CD8-positive, alpha-beta T cell (primary cell): ENCODE measurements at regions of chr9 and their contacts with region 1.

Region 1: DNA sequence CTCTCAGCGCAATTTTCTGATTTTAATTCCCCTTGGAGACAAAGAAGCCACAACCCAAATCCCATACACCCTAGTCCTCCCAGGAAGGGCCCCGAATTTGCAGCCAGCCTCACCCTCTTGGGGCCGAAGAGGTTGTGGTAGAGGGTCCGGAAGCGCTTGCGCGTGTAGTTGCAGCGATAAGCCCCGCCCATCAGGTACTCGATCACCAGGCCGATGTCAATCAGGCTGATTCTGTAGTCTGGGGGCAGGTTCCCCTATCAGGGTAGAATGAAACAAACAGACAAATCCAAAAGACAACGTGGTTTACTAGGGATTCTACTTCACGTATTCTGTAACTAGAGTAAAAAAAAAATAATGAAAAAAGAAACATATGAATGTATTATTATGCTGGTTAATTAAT is 210.6 kb upstream of the KLF9 start:
- DNase-seq: no peak
- ATAC-seq: no peak
- H3K4me3 ChIP-seq: no peak overlapping the region
- H3K4me3 Mint-ChIP-seq: peak overlapping the region; percentile 32
- H3K27ac ChIP-seq: no peak overlapping the region
- H3K27ac Mint-ChIP-seq: no peak overlapping the region
- H3K4me1 ChIP-seq: no peaks in the 10 kb centered on the region
- H3K4me1 Mint-ChIP-seq: peaks cover 2% of the 10 kb centered on the region
- H3K27me3 ChIP-seq: no peaks in the 10 kb centered on the region
- H3K27me3 Mint-ChIP-seq: peaks cover 7% of the 10 kb centered on the region
- CTCF ChIP-seq: no peak

Region 2: GRCh38 chr9:69444021-69444420 is 1181.1 kb before region 1 on chr9:
- CTCF ChIA-PET with region 1: no interaction called
- POLR2A ChIA-PET with region 1: no interaction called
- intact Hi-C with region 1: no loop called
- DNase-seq: no peak
- ATAC-seq: no peak
- H3K4me3 ChIP-seq: no peak overlapping the region
- H3K4me3 Mint-ChIP-seq: no peak overlapping the region
- H3K27ac ChIP-seq: no peak overlapping the region
- H3K27ac Mint-ChIP-seq: no peak overlapping the region
- H3K4me1 ChIP-seq: no peaks in the 10 kb centered on the region
- H3K4me1 Mint-ChIP-seq: no peaks in the 10 kb centered on the region
- H3K27me3 ChIP-seq: no peaks in the 10 kb centered on the region
- H3K27me3 Mint-ChIP-seq: peaks cover 23% of the 10 kb centered on the region
- CTCF ChIP-seq: no peak

Region 3: DNA sequence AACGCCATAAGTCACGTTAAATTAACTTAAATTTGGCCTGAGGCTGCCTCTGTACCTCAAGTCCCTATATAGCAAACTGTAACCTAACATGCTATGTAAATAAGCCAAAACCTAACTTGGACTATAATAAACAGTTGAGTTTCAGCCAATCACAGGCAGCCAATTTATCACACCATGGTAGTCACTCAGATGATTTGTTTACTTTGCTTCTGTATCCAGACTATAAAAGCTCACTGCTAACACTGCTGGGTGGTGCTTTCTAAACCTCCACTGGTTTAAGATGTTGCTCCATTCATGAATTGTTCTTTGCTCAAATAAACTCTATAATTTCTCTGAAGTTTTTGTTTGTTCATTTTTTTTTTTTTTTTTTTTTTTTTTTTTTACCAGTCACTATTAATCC is 433.6 kb after region 1 on chr9:
- CTCF ChIA-PET with region 1: no interaction called
- POLR2A ChIA-PET with region 1: no interaction called
- intact Hi-C with region 1: no loop called
- DNase-seq: no peak
- ATAC-seq: no peak
- H3K4me3 ChIP-seq: no peak overlapping the region
- H3K4me3 Mint-ChIP-seq: no peak overlapping the region
- H3K27ac ChIP-seq: no peak overlapping the region
- H3K27ac Mint-ChIP-seq: no peak overlapping the region
- H3K4me1 ChIP-seq: no peaks in the 10 kb centered on the region
- H3K4me1 Mint-ChIP-seq: no peaks in the 10 kb centered on the region
- H3K27me3 ChIP-seq: no peaks in the 10 kb centered on the region
- H3K27me3 Mint-ChIP-seq: peaks cover 3% of the 10 kb centered on the region
- CTCF ChIP-seq: no peak

Region 4: DNA sequence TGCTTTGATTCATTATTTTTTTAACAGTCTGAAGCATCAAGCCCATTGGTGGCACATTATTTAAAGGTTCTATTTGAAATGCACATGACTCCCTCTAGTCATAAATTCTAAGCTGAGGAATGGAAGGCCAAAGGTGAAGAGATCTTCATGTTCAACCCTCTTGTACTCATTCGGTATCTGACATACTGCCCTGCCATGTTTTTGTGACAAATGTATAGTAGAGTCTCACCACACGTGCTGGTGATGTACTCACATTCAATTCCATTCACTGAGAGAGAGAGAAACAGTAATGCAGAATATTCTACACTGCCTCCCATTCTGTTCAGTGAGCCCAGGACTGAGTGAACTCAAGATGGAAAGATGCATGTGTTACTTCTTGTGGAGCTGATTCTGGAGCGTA is 1622.5 kb after region 1 on chr9:
- CTCF ChIA-PET with region 1: no interaction called
- POLR2A ChIA-PET with region 1: no interaction called
- intact Hi-C with region 1: loop called in 1 of 2 experiments (anchors 10 kb)
- DNase-seq: no peak
- ATAC-seq: no peak
- H3K4me3 ChIP-seq: no peak overlapping the region
- H3K4me3 Mint-ChIP-seq: no peak overlapping the region
- H3K27ac ChIP-seq: no peak overlapping the region
- H3K27ac Mint-ChIP-seq: no peak overlapping the region
- H3K4me1 ChIP-seq: no peaks in the 10 kb centered on the region
- H3K4me1 Mint-ChIP-seq: no peaks in the 10 kb centered on the region
- H3K27me3 ChIP-seq: no peaks in the 10 kb centered on the region
- H3K27me3 Mint-ChIP-seq: peaks cover 15% of the 10 kb centered on the region
- CTCF ChIP-seq: no peak